ENCODE measurements at regions of chr17 and their contacts with region 1.

Region 1: GRCh38 chr17:44775136-44775837 is 16.5 kb downstream of the ADAM11 start:
- DNase-seq: peak; percentile 97
- ATAC-seq: peak; percentile 91
- H3K4me3 ChIP-seq: peak overlapping the region; percentile 62 to 67
- H3K27ac ChIP-seq: peak overlapping the region; percentile 69
- H3K4me1 ChIP-seq: peaks cover 3 to 30% of the 10 kb centered on the region in 2 experiments; a peak in 3 of 4 replicates
- H3K27me3 ChIP-seq: no peaks in the 10 kb centered on the region
- CTCF ChIP-seq: no peak; a peak in 1 of 6 replicates
- POLR2A ChIP-seq: peak; percentile 69
- RAD21 ChIP-seq: no peak

Region 2: DNA sequence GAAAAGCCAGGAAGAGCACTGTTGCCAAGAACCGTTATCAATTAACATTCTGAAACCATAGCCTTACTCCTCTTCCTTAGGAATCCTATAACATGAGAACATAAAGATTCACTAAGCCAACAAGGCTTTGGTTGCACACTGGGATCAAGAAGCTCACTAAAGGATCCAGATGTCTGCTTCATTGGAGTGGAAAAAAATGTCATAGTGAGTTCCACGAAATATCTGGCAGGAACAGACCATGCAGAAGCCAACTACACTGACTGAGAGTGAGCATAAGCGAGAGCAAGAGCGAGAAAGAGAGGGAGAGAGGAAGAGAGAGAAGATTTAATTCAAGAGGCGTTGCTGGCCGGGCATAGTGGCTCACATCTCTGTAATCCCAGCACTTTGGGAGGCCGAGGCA is 132.5 kb before region 1 on chr17:
- CTCF ChIA-PET with region 1: no interaction called
- POLR2A ChIA-PET with region 1: no interaction called
- RAD21 ChIA-PET with region 1: no interaction called
- intact Hi-C with region 1: no loop called
- DNase-seq: no peak
- ATAC-seq: no peak
- H3K4me3 ChIP-seq: no peak overlapping the region
- H3K27ac ChIP-seq: no peak overlapping the region
- H3K4me1 ChIP-seq: no peaks in the 10 kb centered on the region
- H3K27me3 ChIP-seq: no peaks in the 10 kb centered on the region
- CTCF ChIP-seq: no peak
- POLR2A ChIP-seq: no peak
- RAD21 ChIP-seq: no peak

Region 3: DNA sequence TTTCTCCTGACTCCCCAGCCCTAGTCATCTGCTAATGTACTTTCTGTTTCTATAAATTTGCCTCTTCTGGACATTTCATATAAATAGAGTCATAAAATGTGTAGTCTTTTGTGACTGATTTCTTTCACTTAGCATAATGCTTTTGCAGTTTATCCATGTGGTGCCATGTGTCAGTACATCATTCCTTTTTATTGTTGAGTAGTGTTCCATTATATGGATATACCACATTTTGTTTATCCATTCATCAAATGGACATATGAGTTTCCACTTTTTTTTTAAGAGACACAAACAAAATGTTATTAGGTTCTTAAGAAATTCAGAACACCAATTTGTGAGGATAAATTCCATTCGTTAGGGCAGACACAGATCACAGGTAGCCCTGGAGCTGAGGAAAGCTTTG is 55.8 kb before region 1 on chr17:
- CTCF ChIA-PET with region 1: no interaction called
- POLR2A ChIA-PET with region 1: no interaction called
- RAD21 ChIA-PET with region 1: no interaction called
- intact Hi-C with region 1: no loop called
- DNase-seq: no peak
- ATAC-seq: no peak
- H3K4me3 ChIP-seq: no peak overlapping the region
- H3K27ac ChIP-seq: no peak overlapping the region
- H3K4me1 ChIP-seq: no peaks in the 10 kb centered on the region
- H3K27me3 ChIP-seq: no peaks in the 10 kb centered on the region
- CTCF ChIP-seq: no peak
- POLR2A ChIP-seq: no peak
- RAD21 ChIP-seq: no peak

Region 4: GRCh38 chr17:44794851-44795413 is 19.6 kb after region 1 on chr17:
- CTCF ChIA-PET with region 1: interaction called, 12 read pairs
- POLR2A ChIA-PET with region 1: no interaction called
- RAD21 ChIA-PET with region 1: no interaction called
- intact Hi-C with region 1: no loop called
- DNase-seq: peak; percentile 73
- ATAC-seq: peak; percentile 70
- H3K4me3 ChIP-seq: peak overlapping the region in 1 of 2 experiments; percentile 26; a peak in 2 of 4 replicates
- H3K27ac ChIP-seq: peak overlapping the region; percentile 61
- H3K4me1 ChIP-seq: peaks cover 15 to 57% of the 10 kb centered on the region in 2 experiments
- H3K27me3 ChIP-seq: no peaks in the 10 kb centered on the region
- CTCF ChIP-seq: no peak
- POLR2A ChIP-seq: no peak
- RAD21 ChIP-seq: 0 out of 2 replicates have a peak, but pooled peaks have one; percentile 3

Region 5: DNA sequence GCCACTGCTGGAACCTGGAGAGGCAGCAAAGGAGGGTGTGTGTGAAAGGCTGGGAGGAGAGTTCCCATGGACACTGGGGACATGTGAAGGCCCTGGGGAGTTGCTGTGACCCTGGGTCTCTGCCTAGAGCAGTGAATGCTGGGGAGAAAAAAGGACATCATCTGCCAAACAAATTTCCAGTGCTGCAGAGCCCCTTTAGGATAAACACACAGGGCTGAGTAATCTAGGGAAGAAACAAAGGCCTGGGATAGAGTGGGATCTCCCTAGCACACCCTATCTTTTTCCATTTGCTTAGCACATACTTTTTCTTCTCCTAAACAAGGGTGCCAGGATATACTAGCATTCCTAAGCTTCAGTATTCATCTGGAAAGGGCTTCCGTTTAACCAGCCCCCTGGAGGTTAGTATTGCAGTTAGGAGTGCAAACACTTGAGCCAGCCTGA is 69.1 kb after region 1 on chr17:
- CTCF ChIA-PET with region 1: interaction called, 12 read pairs
- POLR2A ChIA-PET with region 1: no interaction called
- RAD21 ChIA-PET with region 1: no interaction called
- intact Hi-C with region 1: no loop called
- DNase-seq: no peak
- ATAC-seq: no peak
- H3K4me3 ChIP-seq: no peak overlapping the region
- H3K27ac ChIP-seq: no peak overlapping the region
- H3K4me1 ChIP-seq: peaks cover 7 to 10% of the 10 kb centered on the region in 2 experiments; a peak in 3 of 4 replicates
- H3K27me3 ChIP-seq: no peaks in the 10 kb centered on the region
- CTCF ChIP-seq: no peak
- POLR2A ChIP-seq: no peak
- RAD21 ChIP-seq: no peak

Region 6: DNA sequence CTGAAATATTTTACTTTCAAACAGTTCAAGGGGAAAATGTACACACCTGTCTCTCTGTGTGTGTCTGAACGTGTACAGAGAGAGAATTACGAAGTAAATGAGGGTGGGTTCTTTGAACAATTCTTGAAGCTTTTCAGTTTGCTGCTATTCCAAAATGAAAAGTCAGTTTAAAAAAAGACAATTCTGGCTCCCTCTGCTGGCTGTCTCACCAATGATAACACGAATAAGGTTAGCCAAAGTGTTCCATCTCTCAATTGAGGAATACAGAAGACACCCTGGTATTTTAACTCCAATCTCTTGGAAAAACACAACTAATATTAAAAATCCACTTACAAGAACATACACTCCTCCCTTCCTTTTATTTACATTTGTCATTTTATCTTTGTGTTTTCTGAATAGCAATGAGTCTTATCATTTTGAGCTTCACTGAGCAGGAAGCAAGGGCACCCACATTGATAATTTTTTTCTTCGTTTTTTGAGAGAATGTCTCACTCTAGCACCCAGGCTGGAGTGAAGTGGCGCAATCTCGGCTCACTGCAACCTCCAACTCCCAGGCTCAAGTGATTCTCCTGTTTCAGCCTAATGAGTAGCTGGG is 103.4 kb after region 1 on chr17:
- CTCF ChIA-PET with region 1: interaction called, 29 read pairs
- POLR2A ChIA-PET with region 1: no interaction called
- RAD21 ChIA-PET with region 1: interaction called, 3 to 6 read pairs
- intact Hi-C with region 1: loop called (anchors 1 kb)
- DNase-seq: peak; percentile 6
- ATAC-seq: peak; percentile 55
- H3K4me3 ChIP-seq: no peak overlapping the region
- H3K27ac ChIP-seq: no peak overlapping the region
- H3K4me1 ChIP-seq: no peaks in the 10 kb centered on the region
- H3K27me3 ChIP-seq: no peaks in the 10 kb centered on the region
- CTCF ChIP-seq: peak; percentile 62 to 78 (median 71); a peak in 5 of 6 replicates
- POLR2A ChIP-seq: no peak
- RAD21 ChIP-seq: peak; percentile 66

Region 7: DNA sequence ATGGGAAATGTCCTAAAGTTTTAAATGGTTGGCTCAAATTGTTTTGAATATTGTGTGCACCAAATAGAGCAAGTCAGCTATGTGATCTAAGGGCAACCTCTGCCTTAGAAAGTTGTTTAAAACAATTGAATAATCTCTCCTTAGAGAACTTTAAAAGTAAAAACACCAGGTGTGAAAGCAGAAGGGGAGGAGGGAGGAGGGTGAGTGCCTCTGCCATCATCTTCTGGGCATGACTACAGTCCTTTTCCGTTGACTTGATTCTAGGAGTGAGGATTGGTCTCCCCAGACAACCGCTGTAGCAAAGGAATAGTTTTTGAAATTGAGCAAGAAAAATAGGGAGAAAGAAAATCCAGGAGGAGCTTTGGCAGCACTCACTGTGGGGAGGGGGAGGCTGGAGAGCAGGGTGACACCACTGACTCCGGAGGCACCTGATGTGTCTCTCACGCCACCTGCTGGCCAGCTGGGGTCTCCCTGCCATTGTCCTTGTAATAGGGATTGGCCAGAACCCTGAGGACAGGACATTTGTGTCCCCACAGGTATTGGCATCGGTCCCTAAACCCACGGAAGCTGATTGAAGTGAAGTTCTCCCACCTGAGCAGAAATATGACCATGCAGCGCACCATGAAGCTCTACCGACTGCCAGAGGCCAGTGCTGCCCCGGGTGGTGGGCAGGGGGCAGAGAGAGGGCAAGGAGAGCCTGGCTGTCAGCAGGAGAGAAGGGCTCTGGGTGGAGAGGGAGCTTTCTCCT is 323.8 kb after region 1 on chr17:
- CTCF ChIA-PET with region 1: no interaction called
- POLR2A ChIA-PET with region 1: no interaction called
- RAD21 ChIA-PET with region 1: interaction called in 1 of 2 experiments, 3 read pairs
- intact Hi-C with region 1: loop called (anchors 10 kb)
- DNase-seq: peak; percentile 51
- ATAC-seq: peak; percentile 96
- H3K4me3 ChIP-seq: no peak overlapping the region
- H3K27ac ChIP-seq: peak overlapping the region; percentile 19; the same call in 1 of the 2 replicates
- H3K4me1 ChIP-seq: peaks cover 0 to 3% of the 10 kb centered on the region in 2 experiments; a peak in 1 of 4 replicates
- H3K27me3 ChIP-seq: no peaks in the 10 kb centered on the region
- CTCF ChIP-seq: peak; percentile 73 to 94 (median 92)
- POLR2A ChIP-seq: no peak
- RAD21 ChIP-seq: peak; percentile 72